ENCODE measurements at regions of chr1 and their contacts with region 1.

Region 1: GRCh38 chr1:198756470-198756869 is 117.6 kb downstream of the PTPRC start:
- DNase-seq: no peak
- ATAC-seq: peak in 1 of 4 donors; percentile 49
- H3K4me3 ChIP-seq: no peak overlapping the region
- H3K27ac ChIP-seq: no peak overlapping the region
- H3K4me1 ChIP-seq: no peaks in the 10 kb centered on the region
- H3K27me3 ChIP-seq: no peaks in the 10 kb centered on the region
- CTCF ChIP-seq: peak; percentile 45

Region 2: DNA sequence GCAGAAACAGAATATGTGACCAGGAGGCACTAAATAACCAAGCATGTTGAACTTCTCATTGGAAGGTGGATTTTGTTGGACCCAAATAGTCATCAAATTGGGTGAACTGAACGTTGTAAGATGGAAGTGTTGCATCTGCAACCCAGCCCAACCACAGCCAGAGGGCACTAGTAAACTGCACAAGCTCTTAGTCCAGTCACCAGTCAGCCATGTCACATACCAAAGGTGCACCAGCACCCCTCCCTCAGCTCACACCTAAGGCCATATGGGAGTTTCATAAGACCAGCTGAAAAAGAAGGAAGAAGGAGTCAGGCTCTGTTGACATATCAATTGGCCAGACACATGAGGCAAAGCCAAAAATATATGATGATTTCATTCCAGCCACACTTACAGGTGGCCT is 789.3 kb after region 1 on chr1:
- intact Hi-C with region 1: loop called (anchors 5 to 10 kb)
- DNase-seq: no peak
- ATAC-seq: no peak
- H3K4me3 ChIP-seq: no peak overlapping the region
- H3K27ac ChIP-seq: no peak overlapping the region
- H3K4me1 ChIP-seq: no peaks in the 10 kb centered on the region
- H3K27me3 ChIP-seq: no peaks in the 10 kb centered on the region
- CTCF ChIP-seq: no peak

Region 3: GRCh38 chr1:199551967-199552565 is 795.6 kb after region 1 on chr1:
- intact Hi-C with region 1: loop called (anchors 5 to 10 kb)
- DNase-seq: no peak
- ATAC-seq: no peak
- H3K4me3 ChIP-seq: no peak overlapping the region
- H3K27ac ChIP-seq: no peak overlapping the region
- H3K4me1 ChIP-seq: no peaks in the 10 kb centered on the region
- H3K27me3 ChIP-seq: no peaks in the 10 kb centered on the region
- CTCF ChIP-seq: peak; percentile 57